K562 (cell line): ENCODE measurements at regions of chr1 and their contacts with region 1.

Region 1: DNA sequence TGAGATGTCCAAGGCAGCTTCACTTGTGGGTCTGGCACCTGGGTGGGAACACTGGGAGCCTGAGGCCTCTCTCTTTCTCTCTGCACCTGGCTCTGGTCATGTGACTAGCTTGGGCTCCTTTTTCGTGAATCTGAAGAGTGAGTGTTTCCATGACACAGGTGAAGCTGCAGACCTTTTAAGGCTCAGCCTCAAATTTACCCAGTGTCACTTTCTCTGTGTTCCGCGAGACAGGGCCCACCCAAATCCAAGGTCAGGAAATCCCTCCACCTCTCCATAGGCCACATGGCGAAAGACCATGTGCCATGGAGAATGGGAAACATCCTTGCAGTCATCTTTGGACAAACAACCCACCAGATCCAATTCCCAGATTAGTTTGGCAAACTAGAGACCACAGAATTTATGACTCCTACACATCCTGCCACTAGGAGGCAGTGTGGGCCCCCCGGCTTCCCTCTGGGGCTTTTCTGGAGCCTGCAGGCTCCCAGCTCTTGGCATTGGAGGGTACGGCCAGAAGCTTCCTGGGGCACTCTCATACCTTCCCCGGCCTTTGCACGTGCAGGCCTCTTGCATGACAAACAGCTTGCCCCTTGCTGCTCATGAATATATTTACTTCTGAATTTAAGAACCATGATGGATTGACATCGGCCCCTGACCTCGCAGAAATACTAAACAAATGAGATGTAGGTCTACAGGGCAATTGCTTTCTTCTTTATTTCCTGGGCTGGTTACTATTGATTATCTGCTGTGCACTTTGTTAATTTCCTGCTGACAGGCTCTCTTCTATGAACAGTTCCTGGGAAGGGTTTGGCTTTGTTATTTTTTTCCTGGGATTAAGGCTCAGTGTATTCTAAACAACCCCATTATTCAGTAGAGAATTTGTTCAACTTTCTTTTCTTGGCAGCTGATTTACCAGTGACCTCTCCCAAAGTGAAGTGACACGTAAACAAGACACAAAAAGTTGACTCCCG is 180.7 kb downstream of the KAZN start:
- DNase-seq: peak; percentile 77 to 87 (median 78)
- ATAC-seq: peak; percentile 30
- H3K4me3 ChIP-seq: no peak overlapping the region
- H3K27ac ChIP-seq: peak overlapping the region; percentile 95
- H3K4me1 ChIP-seq: peaks cover 61 to 71% of the 10 kb centered on the region in 2 experiments
- H3K27me3 ChIP-seq: no peaks in the 10 kb centered on the region
- CTCF ChIP-seq: peak; percentile 86 to 97 (median 94)
- EP300 ChIP-seq: 0 out of 2 replicates have a peak, but pooled peaks have one; percentile 24
- POLR2A ChIP-seq: no peak
- RAD21 ChIP-seq: peak; percentile 64 to 84

Region 2: GRCh38 chr1:14759042-14759818 is 20.0 kb before region 1 on chr1:
- CTCF ChIA-PET with region 1: no interaction called
- POLR2A ChIA-PET with region 1: interaction called, 45 read pairs
- in situ Hi-C with region 1: no loop called
- intact Hi-C with region 1: no loop called
- DNase-seq: no peak
- ATAC-seq: no peak
- H3K4me3 ChIP-seq: no peak overlapping the region
- H3K27ac ChIP-seq: no peak overlapping the region
- H3K4me1 ChIP-seq: no peaks in the 10 kb centered on the region; a peak in 1 of 5 replicates
- H3K27me3 ChIP-seq: peaks cover 35 to 57% of the 10 kb centered on the region in 2 experiments
- CTCF ChIP-seq: no peak
- EP300 ChIP-seq: no peak
- POLR2A ChIP-seq: no peak
- RAD21 ChIP-seq: no peak

Region 3: GRCh38 chr1:14804626-14805025 is 25.4 kb after region 1 on chr1:
- CTCF ChIA-PET with region 1: no interaction called
- POLR2A ChIA-PET with region 1: interaction called, 10 read pairs
- in situ Hi-C with region 1: no loop called
- intact Hi-C with region 1: loop called (anchors 1 kb)
- DNase-seq: peak; percentile 65 to 77 (median 69)
- ATAC-seq: peak; percentile 93
- H3K4me3 ChIP-seq: no peak overlapping the region
- H3K27ac ChIP-seq: no peak overlapping the region
- H3K4me1 ChIP-seq: peaks cover 12 to 13% of the 10 kb centered on the region in 2 experiments; a peak in 4 of 5 replicates
- H3K27me3 ChIP-seq: no peaks in the 10 kb centered on the region
- CTCF ChIP-seq: peak; percentile 79 to 81 (median 79)
- EP300 ChIP-seq: no peak
- POLR2A ChIP-seq: no peak
- RAD21 ChIP-seq: peak; percentile 50 to 85

Region 4: DNA sequence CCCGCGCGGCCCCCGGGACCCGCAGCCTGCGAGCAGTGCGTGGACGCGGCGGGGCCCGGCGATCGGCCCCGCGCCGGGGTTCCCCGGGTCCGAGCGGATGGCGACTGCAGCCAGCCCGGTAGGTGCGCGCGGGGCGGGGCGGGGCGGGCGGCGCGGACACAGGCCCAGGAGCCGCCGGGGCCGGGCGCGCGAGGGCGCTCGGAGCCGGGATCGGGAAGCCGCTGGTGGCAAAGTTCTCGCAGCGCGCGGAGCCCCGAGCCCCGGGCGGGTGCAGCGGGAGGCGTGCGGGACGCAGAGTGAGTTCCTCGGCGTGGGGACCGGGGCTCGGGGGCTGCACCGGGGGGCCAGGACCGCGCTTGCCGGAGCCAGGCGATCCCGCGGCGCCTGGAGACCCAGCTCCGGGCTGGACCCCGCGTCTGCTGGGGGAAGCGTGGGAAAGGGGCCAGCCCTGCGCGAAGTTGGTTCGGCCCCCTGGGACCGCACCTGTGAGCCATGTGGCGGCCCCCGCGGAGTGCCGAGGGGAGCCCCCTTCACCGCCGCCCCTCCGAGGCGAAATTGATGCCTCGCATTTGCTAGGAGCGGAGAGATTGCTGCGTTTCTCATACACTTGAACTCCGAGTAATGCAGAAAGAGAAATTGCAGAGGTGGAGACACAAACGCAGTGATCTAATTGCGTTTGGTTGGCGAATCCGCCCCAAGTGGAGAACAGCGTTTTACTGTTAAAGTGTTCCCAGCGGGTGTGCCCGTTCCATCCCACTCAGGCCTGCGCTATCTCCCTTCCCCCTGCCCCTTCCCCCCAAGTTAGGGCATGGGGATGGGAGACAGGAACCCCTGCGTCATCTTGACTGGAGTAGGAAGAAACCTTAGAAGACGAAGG is 145.5 kb after region 1 on chr1:
- CTCF ChIA-PET with region 1: no interaction called
- POLR2A ChIA-PET with region 1: no interaction called
- in situ Hi-C with region 1: no loop called
- intact Hi-C with region 1: loop called (anchors 5 kb)
- DNase-seq: peak; percentile 72 to 88 (median 82)
- ATAC-seq: peak; percentile 78
- H3K4me3 ChIP-seq: peak overlapping the region; percentile 59
- H3K27ac ChIP-seq: peak overlapping the region; percentile 1; the same call in 1 of the 3 replicates
- H3K4me1 ChIP-seq: peaks cover 29 to 33% of the 10 kb centered on the region in 2 experiments
- H3K27me3 ChIP-seq: no peaks in the 10 kb centered on the region; a peak in 1 of 5 replicates
- CTCF ChIP-seq: peak in 2 of 3 experiments; percentile 41 to 42; a peak in 3 of 6 replicates
- EP300 ChIP-seq: no peak
- POLR2A ChIP-seq: no peak
- RAD21 ChIP-seq: peak; percentile 39 to 55; a peak in 3 of 4 replicates

Region 5: GRCh38 chr1:15046487-15047165 is 267.4 kb after region 1 on chr1:
- CTCF ChIA-PET with region 1: no interaction called
- POLR2A ChIA-PET with region 1: no interaction called
- in situ Hi-C with region 1: no loop called
- intact Hi-C with region 1: loop called (anchors 5 kb)
- DNase-seq: peak; percentile 83 to 91 (median 88)
- ATAC-seq: peak; percentile 96
- H3K4me3 ChIP-seq: no peak overlapping the region
- H3K27ac ChIP-seq: no peak overlapping the region
- H3K4me1 ChIP-seq: no peaks in the 10 kb centered on the region
- H3K27me3 ChIP-seq: no peaks in the 10 kb centered on the region
- CTCF ChIP-seq: peak; percentile 89 to 96 (median 93)
- EP300 ChIP-seq: no peak
- POLR2A ChIP-seq: no peak
- RAD21 ChIP-seq: peak; percentile 87 to 96